PC-3 (cell line): ENCODE measurements at regions of chr12 and their contacts with region 1.

Region 1: GRCh38 chr12:751192-751998 is 984 bp upstream of the WNK1 start:
- DNase-seq: peak; percentile 93
- ATAC-seq: peak; percentile 57
- H3K4me3 ChIP-seq: peak overlapping the region; percentile 92
- H3K27ac ChIP-seq: peak overlapping the region; percentile 36
- H3K4me1 ChIP-seq: peaks cover 19% of the 10 kb centered on the region
- H3K27me3 ChIP-seq: no peaks in the 10 kb centered on the region
- CTCF ChIP-seq: peak; percentile 76

Region 2: DNA sequence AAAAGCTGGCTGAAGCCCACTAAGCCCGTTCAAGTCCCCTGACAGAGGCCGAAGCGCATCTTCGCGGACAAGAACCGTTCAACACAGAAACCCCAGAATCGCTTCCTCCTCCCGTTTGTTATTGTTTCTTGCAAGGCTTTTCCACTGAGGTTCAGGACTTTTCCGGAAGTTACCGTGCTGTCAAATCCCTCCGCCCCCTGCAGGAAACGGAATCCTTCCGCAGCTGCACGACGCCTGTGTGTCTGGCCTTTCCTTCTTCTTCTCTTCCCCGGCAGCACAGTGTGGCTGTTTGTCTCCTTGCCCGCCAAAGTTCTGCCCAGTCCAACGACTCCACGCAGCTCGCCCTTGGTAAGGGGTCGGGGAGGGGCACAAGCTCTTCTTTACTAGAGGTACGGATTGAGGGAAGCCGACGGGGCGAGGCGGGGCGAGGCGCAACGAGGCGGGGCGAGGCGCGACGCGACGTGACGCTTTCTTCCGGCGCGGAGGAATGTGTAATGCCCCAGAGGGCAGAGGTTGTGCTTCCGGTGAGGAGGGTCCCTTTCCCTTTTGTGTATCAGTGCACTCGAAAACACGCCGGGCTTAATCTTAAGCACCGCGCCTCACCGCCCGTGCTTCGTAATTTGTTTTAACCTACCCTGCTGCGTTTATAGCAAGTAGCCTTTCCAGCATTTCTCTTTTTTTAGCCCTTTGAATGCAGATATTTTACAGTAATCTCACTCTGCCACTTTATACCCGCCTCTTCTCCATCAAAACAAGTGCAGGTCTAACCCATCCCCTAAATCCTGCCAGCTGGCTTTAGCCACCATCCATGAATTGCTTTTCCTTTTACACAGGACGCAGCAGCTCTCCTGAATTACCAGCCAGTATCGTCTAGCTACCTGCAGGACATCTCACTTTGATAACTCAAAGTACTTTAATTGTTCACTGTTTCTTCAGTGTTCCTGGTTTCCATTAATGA is 362.0 kb before region 1 on chr12 and contains the start of gene KDM5A:
- CTCF ChIA-PET with region 1: no interaction called
- POLR2A ChIA-PET with region 1: no interaction called
- intact Hi-C with region 1: no loop called
- DNase-seq: peak; percentile 85
- ATAC-seq: peak; percentile 91
- H3K4me3 ChIP-seq: peak within 1 kb of the TSS; percentile 93
- H3K27ac ChIP-seq: peak within 1 kb of the TSS; percentile 81
- H3K4me1 ChIP-seq: peaks cover 14% of the 10 kb centered on the region
- H3K27me3 ChIP-seq: no peaks in the 10 kb centered on the region
- CTCF ChIP-seq: no peak
- total RNA-seq, gene KDM5A: 27.8 and 34.0 TPM in 2 replicates

Region 3: DNA sequence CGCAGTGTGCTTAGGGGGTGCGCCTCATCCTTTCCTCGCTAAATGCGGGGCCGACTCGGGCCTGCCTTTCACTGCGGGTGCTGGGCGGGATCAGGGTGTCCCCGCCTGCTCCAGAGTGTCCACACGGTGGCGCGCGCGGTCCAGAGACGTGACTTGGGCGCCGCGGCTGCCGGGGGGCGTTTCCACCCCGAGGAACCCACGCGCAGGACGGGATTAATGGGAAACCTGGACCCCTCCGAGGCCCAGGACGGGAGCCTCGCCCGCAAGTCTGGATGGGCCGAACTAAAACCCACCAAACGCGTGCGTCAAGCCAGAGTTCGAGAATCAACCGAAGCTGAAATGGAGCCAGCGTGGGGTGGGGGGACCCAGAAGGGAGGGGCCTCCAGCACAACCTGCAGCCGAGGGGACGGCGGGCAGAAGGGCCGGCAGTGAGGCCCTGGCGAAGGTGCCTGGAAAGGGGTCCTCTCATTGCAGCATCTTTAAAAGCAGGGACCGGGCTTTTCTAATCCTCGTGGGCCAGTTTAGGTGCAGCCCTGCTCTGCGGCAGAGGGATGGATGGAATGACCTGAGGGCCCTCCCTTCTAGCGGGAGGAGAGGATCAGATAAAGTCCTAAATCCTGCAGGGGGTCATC is 181.5 kb before region 1 on chr12:
- CTCF ChIA-PET with region 1: interaction called, 22 read pairs
- POLR2A ChIA-PET with region 1: no interaction called
- intact Hi-C with region 1: loop called (anchors 1 kb)
- DNase-seq: peak; percentile 80
- ATAC-seq: peak; percentile 55
- H3K4me3 ChIP-seq: peak overlapping the region; percentile 87
- H3K27ac ChIP-seq: peak overlapping the region; percentile 90
- H3K4me1 ChIP-seq: peaks cover 24% of the 10 kb centered on the region
- H3K27me3 ChIP-seq: no peaks in the 10 kb centered on the region
- CTCF ChIP-seq: peak; percentile 87

Region 4: GRCh38 chr12:779745-780734 is 28.6 kb after region 1 on chr12:
- CTCF ChIA-PET with region 1: interaction called, 6 read pairs
- POLR2A ChIA-PET with region 1: no interaction called
- intact Hi-C with region 1: loop called (anchors 2 kb)
- DNase-seq: peak; percentile 42
- ATAC-seq: peak; percentile 44
- H3K4me3 ChIP-seq: no peak overlapping the region
- H3K27ac ChIP-seq: peak overlapping the region; percentile 19; the same call in 1 of the 2 replicates
- H3K4me1 ChIP-seq: peaks cover 41% of the 10 kb centered on the region
- H3K27me3 ChIP-seq: no peaks in the 10 kb centered on the region
- CTCF ChIP-seq: no peak

Region 5: DNA sequence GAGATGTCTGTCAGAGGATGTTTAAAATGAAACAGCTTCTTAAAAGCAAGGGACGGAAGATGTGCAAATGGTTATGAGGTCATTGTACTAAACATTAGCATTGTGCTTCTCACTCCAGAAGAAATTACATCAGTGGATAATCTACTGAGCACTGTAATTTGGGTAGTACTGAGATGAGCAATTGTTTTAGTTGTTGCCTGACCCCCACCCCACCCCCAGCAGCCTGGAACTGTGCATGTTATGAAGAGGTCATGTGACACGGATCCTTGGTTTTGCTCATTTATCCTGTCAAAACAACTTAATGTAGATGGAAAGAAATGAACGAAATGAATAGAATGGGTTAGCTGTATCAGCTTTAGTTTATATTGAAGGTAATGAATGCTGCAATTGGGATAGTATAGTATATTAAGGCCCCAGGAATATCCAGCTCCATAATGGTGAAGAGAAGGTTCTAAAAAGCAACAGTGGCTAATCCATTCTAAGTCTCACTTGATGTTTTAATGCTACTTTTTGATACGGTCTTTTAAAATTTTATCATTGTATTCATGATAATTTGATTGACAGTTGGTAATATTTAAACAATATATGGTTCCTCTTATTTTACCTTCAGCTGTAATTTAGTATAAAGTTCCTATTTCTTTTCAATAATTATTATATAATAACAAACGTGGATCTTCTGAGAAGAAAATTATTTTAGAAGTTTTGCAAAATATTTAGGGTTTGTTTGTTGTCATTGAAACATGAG is 59.4 kb after region 1 on chr12:
- CTCF ChIA-PET with region 1: interaction called, 9 read pairs
- POLR2A ChIA-PET with region 1: no interaction called
- intact Hi-C with region 1: loop called (anchors 1 kb)
- DNase-seq: no peak
- ATAC-seq: no peak
- H3K4me3 ChIP-seq: no peak overlapping the region
- H3K27ac ChIP-seq: no peak overlapping the region
- H3K4me1 ChIP-seq: no peaks in the 10 kb centered on the region
- H3K27me3 ChIP-seq: no peaks in the 10 kb centered on the region
- CTCF ChIP-seq: no peak

Region 6: DNA sequence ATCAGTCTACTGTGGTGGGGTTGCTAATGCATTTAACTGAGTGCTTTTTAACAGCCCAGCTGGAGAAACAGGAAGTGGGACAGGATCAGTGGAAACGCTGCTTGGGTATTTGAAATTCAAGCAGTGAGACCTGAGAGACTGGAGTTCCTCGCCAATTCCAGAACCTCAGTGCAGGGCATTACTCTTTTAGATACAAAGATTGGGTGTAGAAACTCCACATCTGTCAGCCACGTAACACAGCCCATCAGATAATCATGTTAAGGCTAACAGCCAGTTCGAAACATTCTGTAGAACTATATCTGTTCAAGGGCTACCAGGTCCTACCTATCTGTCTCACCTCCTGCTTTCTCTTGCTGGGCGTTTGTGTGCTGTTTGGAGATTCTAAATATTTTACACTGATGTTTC is 152.6 kb after region 1 on chr12:
- CTCF ChIA-PET with region 1: interaction called, 13 read pairs
- POLR2A ChIA-PET with region 1: no interaction called
- intact Hi-C with region 1: no loop called
- DNase-seq: no peak
- ATAC-seq: no peak
- H3K4me3 ChIP-seq: no peak overlapping the region
- H3K27ac ChIP-seq: no peak overlapping the region
- H3K4me1 ChIP-seq: no peaks in the 10 kb centered on the region; the same call in 1 of the 2 replicates
- H3K27me3 ChIP-seq: no peaks in the 10 kb centered on the region
- CTCF ChIP-seq: no peak

Region 7: GRCh38 chr12:966724-967123 is 215.3 kb after region 1 on chr12:
- CTCF ChIA-PET with region 1: no interaction called
- POLR2A ChIA-PET with region 1: no interaction called
- intact Hi-C with region 1: no loop called
- DNase-seq: no peak
- ATAC-seq: no peak
- H3K4me3 ChIP-seq: no peak overlapping the region
- H3K27ac ChIP-seq: no peak overlapping the region
- H3K4me1 ChIP-seq: no peaks in the 10 kb centered on the region
- H3K27me3 ChIP-seq: no peaks in the 10 kb centered on the region
- CTCF ChIP-seq: no peak